PC-3 (cell line): ENCODE measurements at regions of chr10 and their contacts with region 1.

Region 1: GRCh38 chr10:119796039-119796438 is 70.2 kb downstream of the INPP5F start:
- DNase-seq: no peak
- ATAC-seq: no peak
- H3K4me3 ChIP-seq: no peak overlapping the region
- H3K27ac ChIP-seq: no peak overlapping the region
- H3K4me1 ChIP-seq: no peaks in the 10 kb centered on the region
- H3K27me3 ChIP-seq: no peaks in the 10 kb centered on the region
- CTCF ChIP-seq: no peak

Region 2: GRCh38 chr10:119705434-119705831 is 90.6 kb before region 1 on chr10:
- CTCF ChIA-PET with region 1: no interaction called
- POLR2A ChIA-PET with region 1: interaction called, 12 read pairs
- intact Hi-C with region 1: no loop called
- DNase-seq: no peak
- ATAC-seq: no peak
- H3K4me3 ChIP-seq: no peak overlapping the region
- H3K27ac ChIP-seq: no peak overlapping the region
- H3K4me1 ChIP-seq: no peaks in the 10 kb centered on the region; the same call in 1 of the 2 replicates
- H3K27me3 ChIP-seq: no peaks in the 10 kb centered on the region
- CTCF ChIP-seq: no peak

Region 3: GRCh38 chr10:119769886-119770285 is 26.2 kb before region 1 on chr10:
- CTCF ChIA-PET with region 1: no interaction called
- POLR2A ChIA-PET with region 1: no interaction called
- intact Hi-C with region 1: no loop called
- DNase-seq: peak; percentile 71
- ATAC-seq: peak; percentile 74
- H3K4me3 ChIP-seq: no peak overlapping the region
- H3K27ac ChIP-seq: peak overlapping the region; percentile 24
- H3K4me1 ChIP-seq: peaks cover 15% of the 10 kb centered on the region
- H3K27me3 ChIP-seq: no peaks in the 10 kb centered on the region
- CTCF ChIP-seq: no peak